CD4-positive, alpha-beta T cell (primary cell): ENCODE measurements at regions of chr12 and their contacts with region 1.

Region 1: GRCh38 chr12:67355578-67356379 is 86.6 kb downstream of the CAND1 start:
- DNase-seq: peak in 5 of 14 experiments; percentile 4 to 78 (median 63)
- ATAC-seq: peak; percentile 66
- H3K4me3 ChIP-seq: no peak overlapping the region
- H3K4me3 Mint-ChIP-seq: peak overlapping the region; percentile 11
- H3K27ac ChIP-seq: no peak overlapping the region
- H3K27ac Mint-ChIP-seq: no peak overlapping the region
- H3K4me1 ChIP-seq: peaks cover 4% of the 10 kb centered on the region
- H3K4me1 Mint-ChIP-seq: peaks cover 13% of the 10 kb centered on the region
- H3K27me3 ChIP-seq: no peaks in the 10 kb centered on the region
- H3K27me3 Mint-ChIP-seq: no peaks in the 10 kb centered on the region
- CTCF ChIP-seq: peak; percentile 87

Region 2: DNA sequence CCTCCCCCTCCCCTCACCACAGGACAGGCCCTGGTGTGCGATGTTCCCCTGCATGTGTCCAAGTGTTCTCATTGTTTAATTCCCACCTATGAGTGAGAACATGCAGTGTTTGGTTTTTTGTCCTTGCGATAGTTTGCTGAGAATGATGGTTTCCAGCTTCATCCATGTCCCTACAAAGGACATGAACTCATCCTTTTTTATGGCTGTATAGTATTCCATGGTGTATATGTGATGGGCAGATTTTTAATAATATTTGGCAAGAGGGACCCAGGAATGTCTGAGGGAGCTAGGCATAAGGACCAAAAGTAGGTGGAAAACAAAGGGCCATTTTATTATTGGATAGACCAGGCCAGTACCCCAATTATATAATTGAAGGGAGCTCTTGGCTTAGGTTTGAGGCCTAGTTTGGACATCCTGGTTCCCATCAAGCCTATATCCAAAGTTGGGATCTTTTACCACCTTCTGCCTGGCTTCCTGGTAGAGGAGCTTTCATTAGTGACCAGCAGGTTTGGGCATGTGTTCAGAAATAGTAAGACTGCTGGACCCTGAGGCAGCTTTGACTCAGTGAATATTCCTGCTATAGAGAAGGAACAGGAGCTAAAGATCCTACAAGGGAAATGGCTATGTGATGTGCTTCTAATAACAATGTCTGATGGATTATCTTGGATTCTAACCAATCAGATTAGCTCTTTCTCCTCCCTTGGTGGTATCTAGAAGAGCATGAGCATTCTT is 10.6 kb before region 1 on chr12:
- CTCF ChIA-PET with region 1: no interaction called
- POLR2A ChIA-PET with region 1: no interaction called
- intact Hi-C with region 1: no loop called
- DNase-seq: no peak
- ATAC-seq: no peak
- H3K4me3 ChIP-seq: no peak overlapping the region
- H3K4me3 Mint-ChIP-seq: no peak overlapping the region
- H3K27ac ChIP-seq: no peak overlapping the region
- H3K27ac Mint-ChIP-seq: no peak overlapping the region
- H3K4me1 ChIP-seq: no peaks in the 10 kb centered on the region
- H3K4me1 Mint-ChIP-seq: no peaks in the 10 kb centered on the region
- H3K27me3 ChIP-seq: no peaks in the 10 kb centered on the region
- H3K27me3 Mint-ChIP-seq: no peaks in the 10 kb centered on the region
- CTCF ChIP-seq: no peak

Region 3: DNA sequence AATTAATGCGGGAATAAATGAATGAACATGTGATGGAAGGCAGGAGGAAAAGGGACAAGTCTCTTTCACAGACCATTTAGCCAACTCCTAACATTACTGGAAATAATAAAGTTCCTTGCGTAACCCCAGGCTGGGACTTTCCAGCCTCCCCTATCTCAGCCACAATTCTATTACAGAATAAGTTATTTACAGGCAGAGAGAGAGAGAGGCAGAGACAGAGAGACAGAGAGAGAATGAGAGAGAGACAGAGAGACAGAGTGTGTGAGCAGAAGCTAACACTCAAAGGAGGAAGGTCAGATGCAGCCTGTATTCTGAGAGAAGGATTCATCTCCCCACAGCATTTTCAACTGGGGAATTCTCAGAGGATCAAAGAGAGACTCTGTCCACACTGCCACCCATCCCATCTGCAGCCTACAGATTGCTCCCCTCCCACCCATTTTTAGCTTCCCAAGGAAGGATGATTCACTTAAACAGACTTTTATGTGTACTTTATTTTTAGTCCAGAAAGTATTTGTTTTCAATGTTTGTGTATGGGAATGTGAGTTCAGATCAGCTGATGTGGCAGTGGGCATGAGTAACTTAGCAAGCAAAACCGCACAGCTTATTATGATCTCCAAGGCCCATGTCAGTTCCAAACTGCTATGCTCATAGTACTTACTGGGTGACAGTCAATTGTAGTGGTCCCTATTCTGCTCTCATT is 79.0 kb after region 1 on chr12:
- CTCF ChIA-PET with region 1: interaction called, 3 read pairs
- POLR2A ChIA-PET with region 1: no interaction called
- intact Hi-C with region 1: loop called (anchors 5 kb)
- DNase-seq: no peak
- ATAC-seq: no peak
- H3K4me3 ChIP-seq: no peak overlapping the region
- H3K4me3 Mint-ChIP-seq: no peak overlapping the region
- H3K27ac ChIP-seq: no peak overlapping the region
- H3K27ac Mint-ChIP-seq: no peak overlapping the region
- H3K4me1 ChIP-seq: no peaks in the 10 kb centered on the region
- H3K4me1 Mint-ChIP-seq: peaks cover 11% of the 10 kb centered on the region
- H3K27me3 ChIP-seq: no peaks in the 10 kb centered on the region
- H3K27me3 Mint-ChIP-seq: no peaks in the 10 kb centered on the region
- CTCF ChIP-seq: no peak

Region 4: GRCh38 chr12:67482751-67483671 is 127.2 kb after region 1 on chr12:
- CTCF ChIA-PET with region 1: no interaction called
- POLR2A ChIA-PET with region 1: no interaction called
- intact Hi-C with region 1: no loop called
- DNase-seq: peak; percentile 58 to 95 (median 84)
- ATAC-seq: peak; percentile 92
- H3K4me3 ChIP-seq: no peak overlapping the region
- H3K4me3 Mint-ChIP-seq: peak overlapping the region; percentile 23
- H3K27ac ChIP-seq: peak overlapping the region; percentile 3 to 66
- H3K27ac Mint-ChIP-seq: peak overlapping the region; percentile 84
- H3K4me1 ChIP-seq: peaks cover 47% of the 10 kb centered on the region
- H3K4me1 Mint-ChIP-seq: peaks cover 52% of the 10 kb centered on the region
- H3K27me3 ChIP-seq: no peaks in the 10 kb centered on the region
- H3K27me3 Mint-ChIP-seq: no peaks in the 10 kb centered on the region
- CTCF ChIP-seq: no peak

Region 5: GRCh38 chr12:67661311-67662021 is 305.7 kb after region 1 on chr12:
- CTCF ChIA-PET with region 1: interaction called, 9 read pairs
- POLR2A ChIA-PET with region 1: interaction called, 3 read pairs
- intact Hi-C with region 1: loop called (anchors 2 to 5 kb)
- DNase-seq: no peak
- ATAC-seq: no peak
- H3K4me3 ChIP-seq: no peak overlapping the region
- H3K4me3 Mint-ChIP-seq: peak overlapping the region; percentile 46
- H3K27ac ChIP-seq: no peak overlapping the region
- H3K27ac Mint-ChIP-seq: peak overlapping the region; percentile 24
- H3K4me1 ChIP-seq: peaks cover 30% of the 10 kb centered on the region
- H3K4me1 Mint-ChIP-seq: peaks cover 94% of the 10 kb centered on the region
- H3K27me3 ChIP-seq: no peaks in the 10 kb centered on the region
- H3K27me3 Mint-ChIP-seq: no peaks in the 10 kb centered on the region
- CTCF ChIP-seq: no peak

Region 6: GRCh38 chr12:67943226-67943892 is 587.6 kb after region 1 on chr12:
- CTCF ChIA-PET with region 1: interaction called, 57 read pairs
- POLR2A ChIA-PET with region 1: interaction called, 23 read pairs
- intact Hi-C with region 1: loop called (anchors 1 kb)
- DNase-seq: peak; percentile 4 to 81 (median 56)
- ATAC-seq: peak; percentile 78
- H3K4me3 ChIP-seq: no peak overlapping the region
- H3K4me3 Mint-ChIP-seq: no peak overlapping the region
- H3K27ac ChIP-seq: no peak overlapping the region
- H3K27ac Mint-ChIP-seq: no peak overlapping the region
- H3K4me1 ChIP-seq: no peaks in the 10 kb centered on the region
- H3K4me1 Mint-ChIP-seq: no peaks in the 10 kb centered on the region
- H3K27me3 ChIP-seq: no peaks in the 10 kb centered on the region
- H3K27me3 Mint-ChIP-seq: peaks cover 4% of the 10 kb centered on the region
- CTCF ChIP-seq: peak; percentile 87

Region 7: DNA sequence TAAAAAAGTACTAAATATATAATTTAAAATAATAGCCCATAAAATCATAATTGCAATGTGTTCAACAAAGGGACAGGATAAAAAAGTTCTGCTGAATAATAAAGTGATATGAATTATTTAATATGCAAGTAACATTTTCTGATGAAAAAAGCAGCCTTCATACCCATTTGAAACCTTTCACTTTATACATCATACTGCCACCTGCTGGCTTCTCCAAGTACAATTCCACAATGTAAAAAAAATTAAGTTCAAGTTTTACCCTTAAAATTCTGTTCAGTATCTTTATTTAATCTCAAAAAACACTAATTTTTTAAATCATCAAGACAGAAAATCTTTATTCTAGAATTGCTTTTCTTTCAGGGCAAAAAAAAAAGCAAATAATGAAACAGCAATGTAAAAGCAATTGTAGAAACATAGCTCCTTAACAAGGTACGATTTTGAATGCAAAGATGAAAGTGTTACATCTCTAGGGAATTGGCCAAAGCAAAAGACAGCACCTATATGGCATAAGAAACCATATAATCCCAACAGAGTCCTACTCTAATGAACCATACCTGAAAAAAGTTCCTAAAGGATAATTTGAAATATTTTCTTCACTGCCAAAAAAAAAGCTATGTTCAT is 961.4 kb after region 1 on chr12:
- CTCF ChIA-PET with region 1: interaction called, 5 read pairs
- POLR2A ChIA-PET with region 1: no interaction called
- intact Hi-C with region 1: loop called (anchors 2 to 5 kb)
- DNase-seq: peak in 10 of 14 experiments; percentile 16 to 79 (median 24)
- ATAC-seq: no peak
- H3K4me3 ChIP-seq: no peak overlapping the region
- H3K4me3 Mint-ChIP-seq: no peak overlapping the region
- H3K27ac ChIP-seq: no peak overlapping the region
- H3K27ac Mint-ChIP-seq: no peak overlapping the region
- H3K4me1 ChIP-seq: no peaks in the 10 kb centered on the region
- H3K4me1 Mint-ChIP-seq: no peaks in the 10 kb centered on the region
- H3K27me3 ChIP-seq: no peaks in the 10 kb centered on the region
- H3K27me3 Mint-ChIP-seq: no peaks in the 10 kb centered on the region
- CTCF ChIP-seq: peak; percentile 86